H1 (cell line): ENCODE measurements at regions of chr10 and their contacts with region 1.

Region 1: GRCh38 chr10:69004821-69005220 is 16.2 kb downstream of the KIFBP start:
- DNase-seq: no peak
- H3K4me3 ChIP-seq: no peak overlapping the region
- H3K27ac ChIP-seq: no peak overlapping the region
- H3K4me1 ChIP-seq: no peaks in the 10 kb centered on the region
- H3K27me3 ChIP-seq: peaks cover 0 to 2% (median 0%) of the 10 kb centered on the region in 4 experiments; a peak in 1 of 7 replicates
- CTCF ChIP-seq: peak in 2 of 3 experiments; percentile 24 to 37; a peak in 2 of 4 replicates
- EP300 ChIP-seq: no peak
- POLR2A ChIP-seq: no peak
- RAD21 ChIP-seq: peak; percentile 52 to 61; a peak in 3 of 4 replicates

Region 2: GRCh38 chr10:69065406-69066361 is 60.9 kb after region 1 on chr10:
- CTCF ChIA-PET with region 1: interaction called, 16 read pairs
- POLR2A ChIA-PET with region 1: no interaction called
- DNase-seq: no peak
- H3K4me3 ChIP-seq: no peak overlapping the region
- H3K27ac ChIP-seq: no peak overlapping the region
- H3K4me1 ChIP-seq: peaks cover 0 to 5% (median 2%) of the 10 kb centered on the region in 4 experiments; a peak in 5 of 7 replicates
- H3K27me3 ChIP-seq: no peaks in the 10 kb centered on the region
- CTCF ChIP-seq: no peak
- EP300 ChIP-seq: no peak
- POLR2A ChIP-seq: no peak
- RAD21 ChIP-seq: no peak

Region 3: DNA sequence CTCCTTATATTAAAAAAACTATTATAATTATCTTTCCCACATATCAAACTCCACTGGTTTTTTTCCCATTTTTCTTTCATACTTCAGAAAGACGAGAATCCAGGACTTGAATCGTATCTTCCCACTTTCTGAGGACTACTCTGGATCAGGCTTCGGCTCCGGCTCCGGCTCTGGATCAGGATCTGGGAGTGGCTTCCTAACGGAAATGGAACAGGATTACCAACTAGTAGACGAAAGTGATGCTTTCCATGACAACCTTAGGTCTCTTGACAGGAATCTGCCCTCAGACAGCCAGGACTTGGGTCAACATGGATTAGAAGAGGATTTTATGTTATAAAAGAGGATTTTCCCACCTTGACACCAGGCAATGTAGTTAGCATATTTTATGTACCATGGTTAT is 99.0 kb after region 1 on chr10:
- CTCF ChIA-PET with region 1: interaction called, 10 read pairs
- POLR2A ChIA-PET with region 1: no interaction called
- DNase-seq: no peak
- H3K4me3 ChIP-seq: no peak overlapping the region
- H3K27ac ChIP-seq: no peak overlapping the region
- H3K4me1 ChIP-seq: peaks cover 0 to 2% (median 0%) of the 10 kb centered on the region in 4 experiments; a peak in 1 of 7 replicates
- H3K27me3 ChIP-seq: no peaks in the 10 kb centered on the region
- CTCF ChIP-seq: no peak
- EP300 ChIP-seq: no peak
- POLR2A ChIP-seq: no peak
- RAD21 ChIP-seq: no peak